B cell (primary cell): ENCODE measurements at regions of chr5 and their contacts with region 1.

Region 1: DNA sequence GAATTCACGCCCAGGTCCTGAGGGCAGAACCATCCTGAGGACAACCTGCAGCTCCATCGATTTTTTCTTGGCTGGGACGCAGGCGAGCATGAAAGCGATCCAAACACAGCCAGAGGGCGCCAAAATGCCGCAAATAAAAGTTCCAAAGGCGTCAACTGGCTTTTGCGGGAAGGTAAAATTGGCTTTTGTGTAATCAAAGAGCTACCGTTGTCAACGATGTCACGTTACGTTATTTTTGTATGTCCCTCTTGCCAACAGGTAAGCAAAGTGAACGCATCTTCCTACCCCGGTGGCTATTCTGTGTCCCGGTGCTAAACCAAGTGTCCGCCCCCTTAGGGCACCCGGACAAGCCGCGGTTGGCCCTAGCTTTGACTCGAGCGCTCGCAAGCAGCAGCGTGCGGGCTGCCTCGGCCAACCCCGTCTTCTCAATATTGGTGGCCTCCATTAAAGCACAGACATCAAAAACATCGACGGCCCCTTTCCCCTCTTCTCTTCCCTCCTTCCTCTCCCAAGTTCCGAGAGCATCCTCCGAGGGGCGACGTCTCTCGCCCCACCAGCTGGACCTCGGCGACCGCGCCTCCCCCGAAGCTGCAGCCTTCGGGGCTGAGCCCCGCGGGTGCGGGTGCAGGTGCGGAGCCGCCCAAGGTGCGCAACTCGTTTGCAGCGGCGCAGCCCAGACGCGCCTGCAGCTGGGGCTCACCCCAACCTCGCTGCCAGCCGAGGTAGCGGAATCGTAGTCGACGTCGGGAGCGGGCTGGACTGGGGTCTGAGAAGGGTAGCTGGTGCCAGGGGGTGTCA is 1.1 kb upstream of the BASP1 start:
- DNase-seq: peak; percentile 92
- ATAC-seq: peak; percentile 42
- H3K4me3 ChIP-seq: peak overlapping the region; percentile 55 to 87 (median 75)
- H3K4me3 Mint-ChIP-seq: peak overlapping the region; percentile 92
- H3K27ac ChIP-seq: peak overlapping the region; percentile 59 to 78
- H3K27ac Mint-ChIP-seq: peak overlapping the region; percentile 96
- H3K4me1 ChIP-seq: peaks cover 26 to 31% of the 10 kb centered on the region in 2 donors
- H3K4me1 Mint-ChIP-seq: peaks cover 41% of the 10 kb centered on the region
- H3K27me3 ChIP-seq: no peaks in the 10 kb centered on the region
- H3K27me3 Mint-ChIP-seq: no peaks in the 10 kb centered on the region
- CTCF ChIP-seq: peak; percentile 91

Region 2: GRCh38 chr5:16135003-16135402 is 1081.4 kb before region 1 on chr5:
- CTCF ChIA-PET with region 1: no interaction called
- POLR2A ChIA-PET with region 1: no interaction called
- intact Hi-C with region 1: no loop called
- DNase-seq: no peak
- ATAC-seq: no peak
- H3K4me3 ChIP-seq: no peak overlapping the region
- H3K4me3 Mint-ChIP-seq: no peak overlapping the region
- H3K27ac ChIP-seq: no peak overlapping the region
- H3K27ac Mint-ChIP-seq: no peak overlapping the region
- H3K4me1 ChIP-seq: no peaks in the 10 kb centered on the region
- H3K4me1 Mint-ChIP-seq: no peaks in the 10 kb centered on the region
- H3K27me3 ChIP-seq: no peaks in the 10 kb centered on the region
- H3K27me3 Mint-ChIP-seq: no peaks in the 10 kb centered on the region
- CTCF ChIP-seq: no peak

Region 3: GRCh38 chr5:17180957-17181723 is 35.2 kb before region 1 on chr5:
- CTCF ChIA-PET with region 1: no interaction called
- POLR2A ChIA-PET with region 1: no interaction called
- intact Hi-C with region 1: no loop called
- DNase-seq: no peak
- ATAC-seq: no peak
- H3K4me3 ChIP-seq: no peak overlapping the region
- H3K4me3 Mint-ChIP-seq: no peak overlapping the region
- H3K27ac ChIP-seq: no peak overlapping the region
- H3K27ac Mint-ChIP-seq: no peak overlapping the region
- H3K4me1 ChIP-seq: no peaks in the 10 kb centered on the region
- H3K4me1 Mint-ChIP-seq: no peaks in the 10 kb centered on the region
- H3K27me3 ChIP-seq: no peaks in the 10 kb centered on the region
- H3K27me3 Mint-ChIP-seq: no peaks in the 10 kb centered on the region
- CTCF ChIP-seq: no peak

Region 4: GRCh38 chr5:17204133-17204489 is 12.3 kb before region 1 on chr5:
- CTCF ChIA-PET with region 1: interaction called, 51 read pairs
- POLR2A ChIA-PET with region 1: no interaction called
- intact Hi-C with region 1: no loop called
- DNase-seq: no peak
- ATAC-seq: no peak
- H3K4me3 ChIP-seq: no peak overlapping the region
- H3K4me3 Mint-ChIP-seq: no peak overlapping the region
- H3K27ac ChIP-seq: no peak overlapping the region
- H3K27ac Mint-ChIP-seq: no peak overlapping the region
- H3K4me1 ChIP-seq: no peaks in the 10 kb centered on the region
- H3K4me1 Mint-ChIP-seq: no peaks in the 10 kb centered on the region
- H3K27me3 ChIP-seq: peaks cover 0 to 2% (median 0%) of the 10 kb centered on the region in 4 experiments
- H3K27me3 Mint-ChIP-seq: peaks cover 12% of the 10 kb centered on the region
- CTCF ChIP-seq: no peak

Region 5: DNA sequence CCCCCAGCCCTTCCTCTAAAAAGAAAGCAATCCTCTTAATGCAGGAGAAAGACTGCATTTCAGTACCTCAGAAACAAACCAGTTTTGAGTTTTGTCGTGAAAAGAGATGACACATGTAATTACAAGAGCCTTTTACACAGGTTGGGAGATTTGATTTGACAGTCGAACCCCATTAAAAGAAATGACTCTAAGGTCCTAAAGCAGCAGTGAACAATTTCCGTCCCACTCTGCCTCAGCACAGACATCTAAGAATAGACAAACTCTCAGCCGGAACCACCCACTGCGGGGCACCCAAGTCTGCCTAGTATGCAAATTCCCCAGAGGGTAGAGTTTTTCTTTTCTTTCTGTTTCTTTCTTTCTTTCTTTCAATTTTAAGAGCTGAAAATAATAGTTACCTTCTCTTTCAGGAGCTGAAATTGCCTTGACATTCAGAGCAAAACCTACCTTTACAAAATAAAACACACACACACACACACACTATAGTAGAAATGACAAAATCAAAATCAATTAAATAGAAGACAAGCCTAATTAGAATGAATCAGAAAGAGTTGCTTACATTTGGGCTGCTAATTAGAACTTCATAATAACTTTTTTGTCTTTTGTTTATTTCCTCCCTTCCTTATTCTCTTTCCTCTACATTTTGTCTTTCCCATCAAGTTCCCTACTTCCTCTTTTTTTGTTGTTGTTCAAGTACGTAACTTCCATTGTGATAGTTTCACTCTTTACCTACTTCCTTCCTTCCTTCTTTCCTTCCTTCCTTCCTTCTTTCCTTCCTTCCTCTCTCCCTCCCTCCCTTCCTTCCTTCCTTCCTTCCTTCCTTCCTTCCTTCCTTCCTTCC is 66.1 kb after region 1 on chr5:
- CTCF ChIA-PET with region 1: interaction called, 10 read pairs
- POLR2A ChIA-PET with region 1: interaction called, 3 read pairs
- intact Hi-C with region 1: loop called (anchors 1 kb)
- DNase-seq: peak; percentile 91
- ATAC-seq: peak; percentile 87
- H3K4me3 ChIP-seq: peak overlapping the region in 4 of 5 experiments; percentile 25 to 47 (median 30)
- H3K4me3 Mint-ChIP-seq: peak overlapping the region; percentile 60
- H3K27ac ChIP-seq: peak overlapping the region; percentile 76 to 92
- H3K27ac Mint-ChIP-seq: peak overlapping the region; percentile 74
- H3K4me1 ChIP-seq: peaks cover 59 to 64% of the 10 kb centered on the region in 2 donors
- H3K4me1 Mint-ChIP-seq: peaks cover 67% of the 10 kb centered on the region
- H3K27me3 ChIP-seq: no peaks in the 10 kb centered on the region
- H3K27me3 Mint-ChIP-seq: no peaks in the 10 kb centered on the region
- CTCF ChIP-seq: no peak

Region 6: GRCh38 chr5:17330375-17330774 is 114.0 kb after region 1 on chr5:
- CTCF ChIA-PET with region 1: no interaction called
- POLR2A ChIA-PET with region 1: no interaction called
- intact Hi-C with region 1: no loop called
- DNase-seq: no peak
- ATAC-seq: no peak
- H3K4me3 ChIP-seq: no peak overlapping the region
- H3K4me3 Mint-ChIP-seq: no peak overlapping the region
- H3K27ac ChIP-seq: no peak overlapping the region
- H3K27ac Mint-ChIP-seq: no peak overlapping the region
- H3K4me1 ChIP-seq: no peaks in the 10 kb centered on the region
- H3K4me1 Mint-ChIP-seq: no peaks in the 10 kb centered on the region
- H3K27me3 ChIP-seq: no peaks in the 10 kb centered on the region
- H3K27me3 Mint-ChIP-seq: no peaks in the 10 kb centered on the region
- CTCF ChIP-seq: no peak

Region 7: GRCh38 chr5:17463653-17464052 is 247.3 kb after region 1 on chr5:
- CTCF ChIA-PET with region 1: interaction called, 10 read pairs
- POLR2A ChIA-PET with region 1: no interaction called
- intact Hi-C with region 1: no loop called
- DNase-seq: no peak
- ATAC-seq: no peak
- H3K4me3 ChIP-seq: no peak overlapping the region
- H3K4me3 Mint-ChIP-seq: no peak overlapping the region
- H3K27ac ChIP-seq: no peak overlapping the region
- H3K27ac Mint-ChIP-seq: no peak overlapping the region
- H3K4me1 ChIP-seq: no peaks in the 10 kb centered on the region
- H3K4me1 Mint-ChIP-seq: no peaks in the 10 kb centered on the region
- H3K27me3 ChIP-seq: no peaks in the 10 kb centered on the region
- H3K27me3 Mint-ChIP-seq: peaks cover 7% of the 10 kb centered on the region
- CTCF ChIP-seq: no peak

Region 8: GRCh38 chr5:18113721-18114120 is 897.3 kb after region 1 on chr5:
- CTCF ChIA-PET with region 1: interaction called, 13 read pairs
- POLR2A ChIA-PET with region 1: no interaction called
- intact Hi-C with region 1: no loop called
- DNase-seq: no peak
- ATAC-seq: no peak
- H3K4me3 ChIP-seq: no peak overlapping the region
- H3K4me3 Mint-ChIP-seq: no peak overlapping the region
- H3K27ac ChIP-seq: no peak overlapping the region
- H3K27ac Mint-ChIP-seq: no peak overlapping the region
- H3K4me1 ChIP-seq: no peaks in the 10 kb centered on the region
- H3K4me1 Mint-ChIP-seq: no peaks in the 10 kb centered on the region
- H3K27me3 ChIP-seq: no peaks in the 10 kb centered on the region
- H3K27me3 Mint-ChIP-seq: peaks cover under 1% of the 10 kb centered on the region
- CTCF ChIP-seq: no peak

Region 9: GRCh38 chr5:18314192-18314778 is 1097.9 kb after region 1 on chr5:
- CTCF ChIA-PET with region 1: interaction called, 82 read pairs
- POLR2A ChIA-PET with region 1: no interaction called
- intact Hi-C with region 1: loop called (anchors 1 kb)
- DNase-seq: peak; percentile 53
- ATAC-seq: no peak
- H3K4me3 ChIP-seq: no peak overlapping the region
- H3K4me3 Mint-ChIP-seq: no peak overlapping the region
- H3K27ac ChIP-seq: no peak overlapping the region
- H3K27ac Mint-ChIP-seq: no peak overlapping the region
- H3K4me1 ChIP-seq: no peaks in the 10 kb centered on the region
- H3K4me1 Mint-ChIP-seq: no peaks in the 10 kb centered on the region
- H3K27me3 ChIP-seq: no peaks in the 10 kb centered on the region
- H3K27me3 Mint-ChIP-seq: peaks cover 5% of the 10 kb centered on the region
- CTCF ChIP-seq: peak; percentile 87